MCF 10A (cell line): ENCODE measurements at regions of chr17 and their contacts with region 1.

Region 1: GRCh38 chr17:75855310-75856081 is at the start of gene WBP2:
- DNase-seq: peak; percentile 100
- H3K4me3 Mint-ChIP-seq: no peak within 1 kb of the TSS
- H3K27ac Mint-ChIP-seq: no peak within 1 kb of the TSS
- H3K4me1 Mint-ChIP-seq: peaks cover 19% of the 10 kb centered on the region
- H3K27me3 Mint-ChIP-seq: no peaks in the 10 kb centered on the region
- CTCF ChIP-seq: peak; percentile 14
- total RNA-seq, gene WBP2: 55.7 and 97.9 TPM in 2 replicates

Region 2: GRCh38 chr17:75238684-75239191 is 616.8 kb before region 1 on chr17:
- CTCF ChIA-PET with region 1: no interaction called
- POLR2A ChIA-PET with region 1: no interaction called
- intact Hi-C with region 1: no loop called
- DNase-seq: peak; percentile 70
- H3K4me3 Mint-ChIP-seq: no peak overlapping the region
- H3K27ac Mint-ChIP-seq: peak overlapping the region; percentile 24
- H3K4me1 Mint-ChIP-seq: peaks cover 5% of the 10 kb centered on the region
- H3K27me3 Mint-ChIP-seq: no peaks in the 10 kb centered on the region
- CTCF ChIP-seq: peak; percentile 85

Region 3: GRCh38 chr17:75667021-75667790 is 188.3 kb before region 1 on chr17 and contains the starts of genes RECQL5 and SAP30BP:
- CTCF ChIA-PET with region 1: no interaction called
- POLR2A ChIA-PET with region 1: interaction called, 19 read pairs
- intact Hi-C with region 1: no loop called
- DNase-seq: peak; percentile 99
- H3K4me3 Mint-ChIP-seq: no peak within 1 kb of the TSS
- H3K27ac Mint-ChIP-seq: no peak within 1 kb of the TSS
- H3K4me1 Mint-ChIP-seq: peaks cover 15% of the 10 kb centered on the region
- H3K27me3 Mint-ChIP-seq: no peaks in the 10 kb centered on the region
- CTCF ChIP-seq: no peak
- total RNA-seq, gene RECQL5: 36.3 and 47.9 TPM in 2 replicates
- total RNA-seq, gene SAP30BP: 108 and 123 TPM in 2 replicates

Region 4: GRCh38 chr17:75688209-75688825 is 167.2 kb before region 1 on chr17:
- CTCF ChIA-PET with region 1: no interaction called
- POLR2A ChIA-PET with region 1: interaction called, 17 read pairs
- intact Hi-C with region 1: no loop called
- DNase-seq: peak; percentile 81
- H3K4me3 Mint-ChIP-seq: peak overlapping the region; percentile 0
- H3K27ac Mint-ChIP-seq: peak overlapping the region; percentile 90
- H3K4me1 Mint-ChIP-seq: peaks cover 75% of the 10 kb centered on the region
- H3K27me3 Mint-ChIP-seq: no peaks in the 10 kb centered on the region
- CTCF ChIP-seq: no peak

Region 5: DNA sequence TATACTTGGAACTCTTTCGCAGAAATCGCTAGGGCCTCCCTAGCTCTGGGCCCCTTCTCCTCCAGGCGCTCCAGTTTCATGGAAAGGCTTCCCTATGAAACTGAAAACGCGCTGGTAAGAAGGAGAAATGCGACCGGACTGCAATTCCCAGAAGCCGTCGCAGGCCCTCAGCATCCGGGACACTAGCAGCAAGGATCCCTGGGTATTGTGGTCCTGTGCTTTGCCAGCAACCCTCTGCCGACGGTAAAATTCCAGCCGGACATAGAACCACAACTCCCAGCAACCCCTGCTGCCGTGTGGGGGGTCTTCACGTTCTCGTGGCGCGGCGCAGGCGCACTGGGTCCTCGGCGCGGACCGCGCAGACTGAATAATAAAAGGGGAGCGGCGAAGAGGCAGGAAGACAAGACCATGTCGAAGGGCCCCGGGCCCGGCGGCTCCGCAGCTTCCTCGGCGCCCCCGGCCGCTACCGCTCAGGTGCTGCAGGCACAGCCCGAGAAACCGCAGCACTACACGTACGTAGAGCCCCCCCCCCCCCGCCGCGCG is 71.0 kb before region 1 on chr17 and contains the start of gene UNK:
- CTCF ChIA-PET with region 1: interaction called, 6 read pairs
- POLR2A ChIA-PET with region 1: interaction called, 128 read pairs
- intact Hi-C with region 1: no loop called
- DNase-seq: peak; percentile 99
- H3K4me3 Mint-ChIP-seq: peak within 1 kb of the TSS; percentile 80
- H3K27ac Mint-ChIP-seq: peak within 1 kb of the TSS; percentile 96
- H3K4me1 Mint-ChIP-seq: peaks cover 19% of the 10 kb centered on the region
- H3K27me3 Mint-ChIP-seq: no peaks in the 10 kb centered on the region
- CTCF ChIP-seq: no peak
- total RNA-seq, gene UNK: 12.3 and 16.0 TPM in 2 replicates

Region 6: DNA sequence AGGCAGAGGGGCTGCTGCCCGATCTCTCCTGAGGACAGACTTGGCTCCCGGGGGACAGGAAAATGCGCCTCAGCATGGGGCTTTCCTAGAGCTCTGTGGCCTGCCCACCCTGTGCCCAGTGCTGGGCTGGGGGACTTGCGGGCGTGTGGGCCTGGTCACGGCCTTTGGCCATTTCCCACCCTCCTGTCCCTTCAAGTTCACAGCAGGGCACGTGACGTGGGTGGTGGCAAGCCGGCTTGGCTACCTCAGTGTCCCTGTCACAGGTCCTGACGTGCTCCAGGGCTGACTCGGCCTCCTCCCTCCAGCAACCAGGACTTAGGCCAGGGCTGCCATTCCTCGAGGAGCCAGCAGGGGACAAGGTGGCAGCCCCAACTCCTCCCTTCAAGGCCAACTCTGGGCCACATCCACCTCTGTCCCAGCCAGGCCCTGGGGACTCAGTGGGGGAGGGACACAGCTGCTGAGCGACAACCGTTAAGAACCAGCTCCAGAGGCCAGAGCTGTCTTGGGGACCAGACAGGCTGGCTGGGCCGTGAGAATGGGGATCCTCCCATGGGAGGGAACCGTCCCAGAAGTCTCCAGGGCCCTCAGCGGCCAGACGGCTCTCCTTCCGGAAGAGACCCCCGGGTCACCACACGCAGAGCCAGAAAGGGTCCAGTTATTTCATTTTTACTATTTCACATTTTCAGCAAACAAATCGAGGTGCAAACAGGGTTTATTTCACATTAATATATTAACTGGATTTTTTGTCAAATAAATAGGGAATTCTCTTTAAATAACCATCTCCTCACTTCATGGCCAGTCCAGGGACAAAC is 10.2 kb before region 1 on chr17:
- CTCF ChIA-PET with region 1: interaction called, 9 read pairs
- POLR2A ChIA-PET with region 1: interaction called, 27 read pairs
- intact Hi-C with region 1: no loop called
- DNase-seq: peak; percentile 77
- H3K4me3 Mint-ChIP-seq: peak overlapping the region; percentile 16
- H3K27ac Mint-ChIP-seq: no peak overlapping the region
- H3K4me1 Mint-ChIP-seq: peaks cover 14% of the 10 kb centered on the region
- H3K27me3 Mint-ChIP-seq: no peaks in the 10 kb centered on the region
- CTCF ChIP-seq: peak; percentile 81

Region 7: GRCh38 chr17:75877752-75878173 is 22.3 kb after region 1 on chr17:
- CTCF ChIA-PET with region 1: interaction called, 36 read pairs
- POLR2A ChIA-PET with region 1: interaction called, 164 read pairs
- intact Hi-C with region 1: no loop called
- DNase-seq: peak; percentile 76
- H3K4me3 Mint-ChIP-seq: peak overlapping the region; percentile 86
- H3K27ac Mint-ChIP-seq: peak overlapping the region; percentile 89
- H3K4me1 Mint-ChIP-seq: peaks cover 13% of the 10 kb centered on the region
- H3K27me3 Mint-ChIP-seq: no peaks in the 10 kb centered on the region
- CTCF ChIP-seq: peak; percentile 34

Region 8: GRCh38 chr17:75904749-75905521 is 49.4 kb after region 1 on chr17 and contains the start of gene MRPL38:
- CTCF ChIA-PET with region 1: no interaction called
- POLR2A ChIA-PET with region 1: interaction called, 17 read pairs
- intact Hi-C with region 1: no loop called
- DNase-seq: peak; percentile 93
- H3K4me3 Mint-ChIP-seq: peak within 1 kb of the TSS; percentile 91
- H3K27ac Mint-ChIP-seq: peak within 1 kb of the TSS; percentile 92
- H3K4me1 Mint-ChIP-seq: peaks cover 16% of the 10 kb centered on the region
- H3K27me3 Mint-ChIP-seq: no peaks in the 10 kb centered on the region
- CTCF ChIP-seq: peak; percentile 96
- total RNA-seq, gene MRPL38: 97.9 and 111 TPM in 2 replicates

Region 9: GRCh38 chr17:76887802-76888201 is 1032.3 kb after region 1 on chr17:
- CTCF ChIA-PET with region 1: no interaction called
- POLR2A ChIA-PET with region 1: no interaction called
- intact Hi-C with region 1: no loop called
- DNase-seq: no peak
- H3K4me3 Mint-ChIP-seq: no peak overlapping the region
- H3K27ac Mint-ChIP-seq: no peak overlapping the region
- H3K4me1 Mint-ChIP-seq: no peaks in the 10 kb centered on the region
- H3K27me3 Mint-ChIP-seq: no peaks in the 10 kb centered on the region
- CTCF ChIP-seq: no peak